ENCODE measurements at regions of chr16 and their contacts with region 1.

Region 1: DNA sequence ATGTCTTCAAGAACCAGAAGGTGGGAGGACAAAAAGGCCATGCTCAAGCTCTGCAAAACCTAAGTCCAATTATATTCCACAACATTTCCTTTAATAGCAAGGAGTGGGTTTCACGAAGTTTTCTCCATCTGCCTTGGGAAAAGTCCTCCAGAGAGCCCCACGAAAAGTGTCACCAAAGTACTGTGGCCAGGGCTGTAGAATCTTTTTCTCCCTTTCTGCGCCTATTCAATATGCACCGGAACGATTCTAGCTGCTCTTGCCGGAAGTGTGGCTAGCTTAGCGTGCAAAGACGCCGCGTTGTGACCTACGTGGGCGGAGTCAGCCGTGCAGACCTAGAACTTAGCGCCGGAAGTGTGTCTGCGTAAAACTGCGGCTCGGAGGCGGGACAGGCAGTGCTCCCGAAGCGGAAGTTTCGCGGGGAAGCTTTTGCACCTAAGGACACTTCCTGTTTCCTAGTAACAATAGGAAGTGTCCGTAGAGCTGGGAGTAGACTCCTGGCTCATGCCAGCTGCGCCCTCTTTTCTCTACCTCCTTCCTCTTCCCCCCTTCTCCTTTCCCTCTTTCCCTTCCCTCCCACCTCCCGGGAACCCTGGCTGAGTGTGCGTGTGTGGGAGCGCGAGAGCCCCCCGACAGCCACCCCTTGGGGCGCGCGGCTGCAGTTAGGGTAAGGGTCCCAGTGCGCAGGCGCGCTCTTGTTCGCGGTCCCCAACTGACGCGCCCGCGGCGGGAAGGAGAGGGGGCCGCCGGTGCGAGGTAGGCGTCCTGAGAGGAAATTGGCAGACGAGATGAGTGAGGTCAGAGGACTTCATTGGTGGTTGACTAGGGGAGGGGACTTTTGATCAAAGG is at the starts of genes ZNF646 and ZNF668:
- DNase-seq: peak; percentile 99
- H3K4me3 Mint-ChIP-seq: peak within 1 kb of the TSS; percentile 90
- H3K27ac Mint-ChIP-seq: peak within 1 kb of the TSS; percentile 93
- H3K4me1 Mint-ChIP-seq: peaks cover 31% of the 10 kb centered on the region
- H3K27me3 Mint-ChIP-seq: no peaks in the 10 kb centered on the region
- total RNA-seq, gene ZNF646: 21.1 and 23.3 TPM in 2 replicates
- total RNA-seq, gene ZNF668: 15.6 and 15.9 TPM in 2 replicates

Region 2: DNA sequence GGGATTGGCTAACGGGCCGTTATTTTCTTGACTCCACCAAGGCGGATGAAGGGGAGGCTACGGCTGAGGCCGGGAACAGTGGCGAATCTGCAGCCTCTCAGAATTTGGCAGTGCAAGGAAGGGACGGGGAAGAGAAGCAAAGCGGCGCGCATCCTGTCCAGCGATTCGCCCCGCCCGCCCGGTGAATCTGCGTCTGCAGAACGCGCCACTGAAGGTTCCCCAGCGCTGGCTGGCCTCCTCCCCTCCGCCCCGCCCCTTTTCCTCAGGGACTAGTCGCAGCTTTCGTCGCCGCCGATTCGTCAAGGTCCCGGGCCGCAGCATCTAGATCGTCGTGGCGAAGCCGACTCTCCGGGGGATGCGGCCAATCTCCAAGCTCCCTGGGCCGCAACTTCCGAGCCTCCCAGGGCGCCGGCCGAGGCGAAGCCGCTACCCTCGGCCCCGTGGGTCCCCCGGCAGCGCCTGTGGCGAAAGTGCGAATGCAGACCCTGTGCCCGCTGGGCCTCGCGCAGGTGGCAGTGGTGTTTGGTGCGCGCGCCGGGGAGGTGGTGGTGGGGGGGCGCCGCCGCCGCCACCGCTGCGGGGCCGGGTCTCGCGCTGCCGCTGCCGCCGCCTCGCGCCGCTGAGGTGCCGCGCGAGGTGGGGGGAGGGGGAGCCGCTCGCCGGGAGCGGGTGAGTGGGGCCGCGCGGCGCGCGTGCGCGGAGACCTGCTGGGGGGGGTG is 116.6 kb before region 1 on chr16 and contains the start of gene SETD1A:
- intact Hi-C with region 1: loop called (anchors 1 kb)
- DNase-seq: peak; percentile 99
- H3K4me3 Mint-ChIP-seq: peak within 1 kb of the TSS; percentile 94
- H3K27ac Mint-ChIP-seq: peak within 1 kb of the TSS; percentile 99
- H3K4me1 Mint-ChIP-seq: peaks cover 32% of the 10 kb centered on the region
- H3K27me3 Mint-ChIP-seq: no peaks in the 10 kb centered on the region
- total RNA-seq, gene SETD1A: 30.7 and 31.5 TPM in 2 replicates

Region 3: DNA sequence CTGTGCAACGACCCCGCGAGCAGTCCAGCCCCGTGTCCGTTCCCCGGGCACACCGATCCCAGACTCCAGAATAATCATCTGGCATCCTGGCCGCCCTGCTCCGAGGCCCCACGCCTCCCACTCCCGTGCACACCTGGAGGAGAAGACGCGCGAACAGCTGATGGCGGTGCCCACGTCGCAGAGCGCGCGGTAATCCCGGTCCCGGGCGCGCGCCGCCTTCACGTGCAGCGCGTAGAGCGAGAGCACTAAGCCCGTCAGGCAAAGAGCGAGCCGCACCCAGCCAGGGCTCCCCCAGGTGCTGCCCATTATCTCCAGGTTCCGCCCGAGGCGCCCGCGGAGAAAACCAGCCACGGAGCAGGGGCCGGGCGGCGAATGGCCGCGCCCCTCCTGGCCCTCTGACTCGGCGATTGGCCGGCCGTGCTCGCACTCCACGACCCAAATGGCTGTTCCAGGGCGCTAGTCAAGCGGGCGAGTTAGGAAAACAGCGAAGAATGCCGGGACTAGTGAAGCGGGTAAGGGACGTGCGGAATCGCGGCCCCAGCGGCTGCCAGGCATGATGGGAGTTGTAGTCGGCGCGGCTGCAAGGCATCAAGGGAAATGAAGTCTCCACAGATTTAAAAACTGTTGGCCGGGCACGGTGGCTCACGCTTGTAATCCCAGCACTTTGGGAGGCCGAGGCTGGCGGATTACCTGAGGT is 20.4 kb after region 1 on chr16 and contains the start of gene VKORC1:
- intact Hi-C with region 1: loop called (anchors 1 kb)
- DNase-seq: peak; percentile 96
- H3K4me3 Mint-ChIP-seq: peak within 1 kb of the TSS; percentile 95
- H3K27ac Mint-ChIP-seq: peak within 1 kb of the TSS; percentile 94
- H3K4me1 Mint-ChIP-seq: peaks cover 23% of the 10 kb centered on the region
- H3K27me3 Mint-ChIP-seq: no peaks in the 10 kb centered on the region
- total RNA-seq, gene VKORC1: 56.2 and 59.1 TPM in 2 replicates

Region 4: DNA sequence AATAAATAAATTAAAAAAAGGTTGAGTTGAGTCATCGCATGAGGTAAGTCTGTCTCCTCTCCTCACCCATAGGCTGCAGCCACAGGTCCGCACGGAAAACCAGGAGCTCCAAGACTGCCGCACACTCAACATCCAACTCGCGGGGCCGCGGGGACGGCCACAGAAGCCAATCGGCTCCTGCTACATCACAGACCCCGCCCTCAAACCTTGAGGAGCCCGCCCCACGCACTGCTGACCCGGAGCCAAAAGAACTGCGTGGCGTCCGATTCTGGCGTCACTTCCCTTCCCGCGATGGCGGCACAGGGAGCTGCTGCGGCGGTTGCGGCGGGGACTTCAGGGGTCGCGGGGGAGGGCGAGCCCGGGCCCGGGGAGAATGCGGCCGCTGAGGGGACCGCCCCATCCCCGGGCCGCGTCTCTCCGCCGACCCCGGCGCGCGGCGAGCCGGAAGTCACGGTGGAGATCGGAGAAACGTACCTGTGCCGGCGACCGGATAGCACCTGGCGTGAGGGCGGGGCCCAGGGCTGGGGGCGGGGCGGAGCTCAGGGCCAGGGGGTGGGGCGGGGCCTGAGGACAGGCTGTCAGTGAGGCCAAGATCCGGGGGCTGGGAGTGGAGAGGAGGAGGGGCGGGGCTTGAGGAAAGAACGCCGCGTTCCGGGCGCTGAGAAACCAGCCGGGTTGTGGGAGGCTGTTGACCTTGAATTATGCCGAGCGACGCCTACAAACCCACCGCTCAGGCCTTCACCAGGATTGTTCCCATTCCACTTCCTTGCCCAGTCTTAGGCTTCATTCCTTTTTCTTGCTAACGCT is 43.4 kb after region 1 on chr16 and contains the start of gene KAT8:
- intact Hi-C with region 1: loop called (anchors 1 kb)
- DNase-seq: peak; percentile 99
- H3K4me3 Mint-ChIP-seq: peak within 1 kb of the TSS; percentile 88
- H3K27ac Mint-ChIP-seq: peak within 1 kb of the TSS; percentile 89
- H3K4me1 Mint-ChIP-seq: peaks cover 11% of the 10 kb centered on the region
- H3K27me3 Mint-ChIP-seq: no peaks in the 10 kb centered on the region
- total RNA-seq, gene KAT8: 56.9 and 63.3 TPM in 2 replicates

Region 5: DNA sequence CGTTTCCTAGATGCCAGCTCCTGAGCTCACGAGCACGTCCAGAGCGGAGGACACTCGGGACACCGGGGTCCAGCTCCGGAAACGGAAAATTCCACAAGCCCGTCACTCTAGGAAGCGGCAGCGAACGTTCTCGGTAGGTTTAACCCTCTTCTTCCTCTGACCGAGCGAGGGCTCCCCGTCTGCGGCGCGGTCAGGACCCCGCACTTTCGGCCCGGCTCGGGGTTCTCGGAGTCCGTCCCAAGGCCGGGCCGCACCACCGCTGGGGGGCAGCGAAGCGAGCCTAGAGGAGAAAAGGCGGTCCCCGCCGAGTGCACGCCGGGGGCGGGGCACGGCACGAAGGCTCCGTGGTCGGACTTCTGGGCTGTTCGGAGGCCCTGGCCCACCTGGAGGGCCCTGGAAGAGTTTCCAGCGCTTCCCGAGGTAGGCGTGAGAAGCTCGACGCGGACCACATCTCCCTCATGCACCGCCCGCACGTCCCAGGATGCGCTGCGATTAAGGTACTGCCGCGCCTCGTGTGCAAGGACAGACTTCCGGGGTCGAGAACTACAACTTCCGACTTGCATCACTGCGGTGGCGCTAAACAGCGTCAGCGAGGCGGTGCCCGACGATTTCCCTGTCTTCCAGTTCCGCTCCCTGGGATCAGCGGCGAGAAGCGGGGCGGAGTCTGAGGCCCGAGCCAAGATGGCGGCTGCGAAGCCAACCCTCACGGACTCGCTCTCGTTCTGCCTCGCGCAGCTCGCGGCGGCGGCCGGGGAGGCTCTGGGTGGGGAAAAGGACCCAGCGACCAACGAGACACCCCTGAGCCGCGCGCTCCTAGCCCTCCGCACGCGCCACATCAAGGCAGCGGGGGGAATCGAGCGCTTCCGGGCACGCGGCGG is 384.9 kb after region 1 on chr16 and contains the start of gene ARMC5:
- intact Hi-C with region 1: loop called (anchors 1 kb)
- DNase-seq: peak; percentile 99
- H3K4me3 Mint-ChIP-seq: peak within 1 kb of the TSS; percentile 95
- H3K27ac Mint-ChIP-seq: peak within 1 kb of the TSS; percentile 98
- H3K4me1 Mint-ChIP-seq: peaks cover 30% of the 10 kb centered on the region
- H3K27me3 Mint-ChIP-seq: no peaks in the 10 kb centered on the region
- total RNA-seq, gene ARMC5: 9.9 and 10.5 TPM in 2 replicates

Measured in activated CD4-positive, alpha-beta T cell treated with anti-CD3 and anti-CD28 coated beads, Interleukin-2, amount 10 ng/mL, durations not matched to agents 24 days and 14 days (primary cell).